ENCODE measurements at regions of chr10 and their contacts with region 1.

Region 1: GRCh38 chr10:102641880-102642735 is 2.2 kb upstream of the TRIM8 start:
- DNase-seq: peak; percentile 99

Region 2: GRCh38 chr10:102476466-102477141 is 165.5 kb before region 1 on chr10:
- intact Hi-C with region 1: no loop called
- DNase-seq: no peak

Region 3: DNA sequence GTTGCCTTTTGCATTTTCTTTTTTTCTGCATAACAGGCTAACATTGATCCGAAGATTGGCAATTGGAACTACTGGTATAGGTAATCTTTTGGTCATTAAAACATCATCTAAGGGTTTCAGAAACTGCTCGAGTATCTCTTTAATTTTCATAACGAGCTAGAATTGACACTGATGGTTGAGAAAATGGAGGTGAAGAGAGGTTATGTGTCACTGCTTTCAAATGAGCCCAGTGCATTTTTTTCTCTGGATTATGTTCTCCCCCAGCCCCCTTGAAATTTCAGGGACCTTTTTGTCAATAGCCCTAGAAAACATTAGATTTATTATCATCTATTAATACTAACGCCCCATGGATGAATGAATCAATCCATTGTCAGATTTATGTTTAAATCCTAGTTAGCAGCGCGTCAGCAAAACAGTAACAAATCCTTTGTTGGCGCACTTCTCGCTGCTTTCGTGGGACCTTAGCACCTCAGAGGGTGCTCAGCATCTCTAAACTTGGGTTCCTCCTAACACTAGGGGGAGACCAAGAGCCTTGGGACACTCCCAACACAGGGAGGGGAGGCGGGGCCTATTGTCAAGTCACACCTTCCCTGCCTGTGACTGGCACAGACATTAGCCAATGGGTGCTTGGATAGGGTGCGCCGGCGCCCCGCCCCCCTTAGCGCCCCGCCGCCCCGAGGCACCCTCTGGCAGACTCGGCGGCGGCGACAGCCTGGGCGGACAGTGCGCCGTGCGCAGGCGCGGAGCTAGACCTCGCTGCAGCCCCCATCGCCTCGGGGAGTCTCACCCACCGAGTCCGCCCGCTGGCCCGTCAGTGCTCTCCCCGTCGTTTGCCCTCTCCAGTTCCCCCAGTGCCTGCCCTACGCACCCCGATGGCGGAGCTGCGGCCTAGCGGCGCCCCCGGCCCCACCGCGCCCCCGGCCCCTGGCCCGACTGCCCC is 138.6 kb before region 1 on chr10 and contains the start of gene SUFU:
- intact Hi-C with region 1: loop called (anchors 2 kb)
- DNase-seq: peak; percentile 99
- total RNA-seq, gene SUFU: 6.1 TPM

Region 4: GRCh38 chr10:102596506-102596971 is 45.6 kb before region 1 on chr10:
- intact Hi-C with region 1: loop called (anchors 2 kb)
- DNase-seq: peak; percentile 75

Region 5: DNA sequence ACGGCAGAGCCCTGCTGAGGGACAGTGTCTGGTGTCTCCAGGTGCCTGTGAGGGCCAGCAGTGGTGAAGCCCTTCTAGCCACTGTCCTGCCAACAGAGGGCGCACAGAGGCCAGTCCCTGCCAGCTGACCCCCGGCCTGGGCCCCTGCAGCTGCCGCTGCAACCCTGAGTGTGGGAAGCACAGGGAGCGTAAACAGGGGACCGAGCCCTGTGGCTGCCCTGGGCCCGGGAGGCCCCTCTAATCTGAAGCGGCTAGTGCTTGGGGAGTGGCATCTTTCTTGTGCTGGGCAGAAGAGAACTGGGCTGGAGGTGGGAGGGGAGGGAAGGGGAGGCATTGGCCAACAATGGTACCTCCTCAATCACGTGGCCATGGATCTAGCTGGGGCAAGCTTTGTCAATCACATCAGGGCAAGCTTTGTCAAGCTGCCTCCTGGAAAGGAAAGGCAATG is 36.8 kb after region 1 on chr10:
- intact Hi-C with region 1: loop called (anchors 2 kb)
- DNase-seq: peak; percentile 89

Region 6: GRCh38 chr10:102713814-102714620 is 71.9 kb after region 1 on chr10 and contains the start of gene ARL3:
- intact Hi-C with region 1: loop called (anchors 5 kb)
- DNase-seq: peak; percentile 99
- total RNA-seq, gene ARL3: 13.1 TPM

Measured in cardiac septum (tissue), 1 donor.